ENCODE measurements at regions of chr2 and their contacts with region 1.

Region 1: GRCh38 chr2:38178547-38179419 is 102.8 kb upstream of the CYP1B1 start:
- DNase-seq: peak; percentile 83 to 91 (median 88)
- H3K4me3 ChIP-seq: peak overlapping the region in 1 of 3 experiments; percentile 66
- H3K4me3 Mint-ChIP-seq: peak overlapping the region in 1 of 2 donors; percentile 72
- H3K27ac ChIP-seq: peak overlapping the region; percentile 74 to 91
- H3K27ac Mint-ChIP-seq: peak overlapping the region; percentile 93 to 98 (median 95)
- H3K4me1 ChIP-seq: peaks cover 69 to 72% of the 10 kb centered on the region in 2 donors
- H3K4me1 Mint-ChIP-seq: peaks cover 68% of the 10 kb centered on the region
- H3K27me3 ChIP-seq: no peaks in the 10 kb centered on the region
- H3K27me3 Mint-ChIP-seq: peaks cover 0 to 7% (median 0%) of the 10 kb centered on the region in 3 donors
- CTCF ChIP-seq: no peak

Region 2: GRCh38 chr2:37934591-37935513 is 243.9 kb before region 1 on chr2:
- intact Hi-C with region 1: no loop called
- DNase-seq: peak in 1 of 3 donors; percentile 21
- H3K4me3 ChIP-seq: peak overlapping the region; percentile 9 to 45 (median 25)
- H3K4me3 Mint-ChIP-seq: peak overlapping the region; percentile 61 to 79
- H3K27ac ChIP-seq: peak overlapping the region in 1 of 2 donors; percentile 39
- H3K27ac Mint-ChIP-seq: peak overlapping the region; percentile 13 to 90 (median 68)
- H3K4me1 ChIP-seq: peaks cover 12 to 19% of the 10 kb centered on the region in 2 donors
- H3K4me1 Mint-ChIP-seq: peaks cover 48% of the 10 kb centered on the region
- H3K27me3 ChIP-seq: no peaks in the 10 kb centered on the region
- H3K27me3 Mint-ChIP-seq: peaks cover 0 to 3% (median 2%) of the 10 kb centered on the region in 3 donors
- CTCF ChIP-seq: no peak

Region 3: DNA sequence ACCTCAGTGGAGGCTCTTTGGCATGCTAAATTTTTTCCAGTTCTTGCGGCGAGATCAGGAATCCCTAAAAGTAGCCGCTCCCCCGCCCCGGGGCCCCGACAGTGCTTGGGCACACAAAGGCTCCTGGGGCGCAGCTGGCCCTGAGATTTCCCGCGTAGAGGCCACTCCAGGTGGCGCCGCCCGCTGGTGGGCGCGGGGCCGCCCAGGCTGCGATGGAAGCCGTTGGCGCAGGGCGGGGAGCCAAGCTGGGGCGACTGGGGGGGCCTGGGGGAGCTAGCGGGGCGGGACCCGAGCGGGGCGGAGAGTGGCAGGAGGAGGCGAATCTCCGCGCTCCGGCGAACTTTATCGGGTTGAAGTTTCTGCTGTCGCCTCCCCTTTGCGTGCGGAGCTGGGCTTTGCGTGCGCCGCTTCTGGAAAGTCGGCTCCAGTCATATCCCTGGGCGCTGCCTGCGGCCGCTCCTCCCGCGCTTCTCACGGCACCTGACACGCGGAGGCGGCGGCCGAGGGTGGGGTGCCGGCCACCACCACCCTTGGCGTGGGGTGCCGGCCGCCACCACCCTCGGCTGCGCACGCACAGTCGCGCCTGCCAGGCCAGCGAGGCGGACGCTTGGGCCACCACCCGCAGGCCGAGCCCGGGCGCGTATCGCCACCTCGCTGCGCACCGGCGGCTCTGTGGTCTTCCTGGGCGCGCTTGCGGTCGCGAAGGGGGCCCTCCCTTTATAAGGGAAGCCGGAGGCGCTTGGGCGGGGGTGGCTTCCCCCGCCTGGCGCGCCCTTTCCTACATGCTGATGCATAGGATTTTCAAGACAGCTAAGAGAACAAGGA is 102.0 kb before region 1 on chr2:
- intact Hi-C with region 1: loop called in 1 of 2 experiments (anchors 5 kb)
- DNase-seq: peak; percentile 92 to 97 (median 94)
- H3K4me3 ChIP-seq: peak overlapping the region; percentile 60 to 93 (median 84)
- H3K4me3 Mint-ChIP-seq: peak overlapping the region; percentile 94 to 98
- H3K27ac ChIP-seq: peak overlapping the region; percentile 94 to 96
- H3K27ac Mint-ChIP-seq: peak overlapping the region; percentile 80 to 94 (median 90)
- H3K4me1 ChIP-seq: peaks cover 48 to 81% of the 10 kb centered on the region in 2 donors
- H3K4me1 Mint-ChIP-seq: peaks cover 66% of the 10 kb centered on the region
- H3K27me3 ChIP-seq: peaks cover 0 to 19% of the 10 kb centered on the region in 2 donors
- H3K27me3 Mint-ChIP-seq: peaks cover 36 to 48% (median 46%) of the 10 kb centered on the region in 3 donors
- CTCF ChIP-seq: peak; percentile 46

Region 4: GRCh38 chr2:38128653-38129052 is 50.1 kb before region 1 on chr2:
- intact Hi-C with region 1: loop called in 1 of 2 experiments (anchors 5 kb)
- DNase-seq: peak; percentile 94 to 98 (median 95)
- H3K4me3 ChIP-seq: no peak overlapping the region
- H3K4me3 Mint-ChIP-seq: peak overlapping the region in 1 of 2 donors; percentile 30
- H3K27ac ChIP-seq: peak overlapping the region; percentile 93
- H3K27ac Mint-ChIP-seq: peak overlapping the region; percentile 94 to 99 (median 99)
- H3K4me1 ChIP-seq: peaks cover 69 to 82% of the 10 kb centered on the region in 2 donors
- H3K4me1 Mint-ChIP-seq: peaks cover 79% of the 10 kb centered on the region
- H3K27me3 ChIP-seq: no peaks in the 10 kb centered on the region
- H3K27me3 Mint-ChIP-seq: peaks cover 0 to 5% (median 0%) of the 10 kb centered on the region in 3 donors
- CTCF ChIP-seq: no peak

Region 5: GRCh38 chr2:38146275-38146906 is 32.4 kb before region 1 on chr2:
- intact Hi-C with region 1: loop called in 1 of 2 experiments (anchors 5 kb)
- DNase-seq: peak; percentile 49 to 82 (median 61)
- H3K4me3 ChIP-seq: peak overlapping the region in 1 of 3 experiments; percentile 29
- H3K4me3 Mint-ChIP-seq: peak overlapping the region in 1 of 2 donors; percentile 9
- H3K27ac ChIP-seq: peak overlapping the region; percentile 92
- H3K27ac Mint-ChIP-seq: peak overlapping the region in 6 of 7 donors; percentile 92 to 99 (median 98)
- H3K4me1 ChIP-seq: peaks cover 73 to 85% of the 10 kb centered on the region in 2 donors
- H3K4me1 Mint-ChIP-seq: peaks cover 55% of the 10 kb centered on the region
- H3K27me3 ChIP-seq: no peaks in the 10 kb centered on the region
- H3K27me3 Mint-ChIP-seq: no peaks in the 10 kb centered on the region
- CTCF ChIP-seq: no peak

Region 6: GRCh38 chr2:38301340-38301968 is 122.7 kb after region 1 on chr2:
- intact Hi-C with region 1: no loop called
- DNase-seq: no peak
- H3K4me3 ChIP-seq: no peak overlapping the region
- H3K4me3 Mint-ChIP-seq: no peak overlapping the region
- H3K27ac ChIP-seq: peak overlapping the region in 1 of 2 donors; percentile 46
- H3K27ac Mint-ChIP-seq: peak overlapping the region in 2 of 7 donors; percentile 17 to 27
- H3K4me1 ChIP-seq: no peaks in the 10 kb centered on the region
- H3K4me1 Mint-ChIP-seq: peaks cover 7% of the 10 kb centered on the region
- H3K27me3 ChIP-seq: no peaks in the 10 kb centered on the region
- H3K27me3 Mint-ChIP-seq: peaks cover 0 to 3% (median 0%) of the 10 kb centered on the region in 3 donors
- CTCF ChIP-seq: no peak